Heart left ventricle (tissue), 16 donors: ENCODE measurements at regions of chrX and their contacts with region 1.

Region 1: GRCh38 chrX:51461053-51462044 is 35.0 kb downstream of the NUDT11 start:
- DNase-seq: no peak
- ATAC-seq: no peak
- H3K4me3 ChIP-seq: no peak overlapping the region
- H3K27ac ChIP-seq: no peak overlapping the region
- H3K4me1 ChIP-seq: no peaks in the 10 kb centered on the region
- H3K27me3 ChIP-seq: peaks cover 0 to 27% (median 0%) of the 10 kb centered on the region in 9 donors
- CTCF ChIP-seq: peak; percentile 53 to 91 (median 70)
- POLR2A ChIP-seq: no peak

Region 2: GRCh38 chrX:51144852-51145442 is 316.4 kb before region 1 on chrX:
- intact Hi-C with region 1: loop called in 3 of 10 experiments (anchors 10 kb)
- DNase-seq: no peak
- ATAC-seq: no peak
- H3K4me3 ChIP-seq: no peak overlapping the region
- H3K27ac ChIP-seq: no peak overlapping the region
- H3K4me1 ChIP-seq: no peaks in the 10 kb centered on the region
- H3K27me3 ChIP-seq: peaks cover 0 to 33% (median 0%) of the 10 kb centered on the region in 9 donors
- CTCF ChIP-seq: peak; percentile 20 to 57 (median 42)
- POLR2A ChIP-seq: no peak

Region 3: GRCh38 chrX:51336584-51336983 is 124.8 kb before region 1 on chrX:
- intact Hi-C with region 1: loop called in 3 of 10 experiments (anchors 5 to 10 kb)
- DNase-seq: peak in 1 of 5 donors; percentile 13
- ATAC-seq: peak in 3 of 4 donors; percentile 52 to 78 (median 63)
- H3K4me3 ChIP-seq: no peak overlapping the region
- H3K27ac ChIP-seq: no peak overlapping the region
- H3K4me1 ChIP-seq: peaks cover 0 to 6% (median 0%) of the 10 kb centered on the region in 12 donors
- H3K27me3 ChIP-seq: peaks cover 0 to 32% (median 0%) of the 10 kb centered on the region in 9 donors
- CTCF ChIP-seq: peak; percentile 29 to 60 (median 51)
- POLR2A ChIP-seq: no peak